ENCODE measurements at regions of chr7 and their contacts with region 1.

Region 1: GRCh38 chr7:128343554-128344430 is at the start of gene RBM28:
- DNase-seq: peak; percentile 95
- H3K4me3 Mint-ChIP-seq: peak within 1 kb of the TSS; percentile 94
- H3K27ac Mint-ChIP-seq: peak within 1 kb of the TSS; percentile 96
- H3K4me1 Mint-ChIP-seq: peaks cover 8% of the 10 kb centered on the region
- H3K27me3 Mint-ChIP-seq: peaks cover 7% of the 10 kb centered on the region
- CTCF ChIP-seq: no peak
- total RNA-seq, gene RBM28: 61.5 and 63.8 TPM in 2 replicates

Region 2: GRCh38 chr7:128322040-128322643 is 21.6 kb before region 1 on chr7:
- CTCF ChIA-PET with region 1: interaction called, 10 read pairs
- POLR2A ChIA-PET with region 1: no interaction called
- intact Hi-C with region 1: no loop called
- DNase-seq: peak; percentile 56
- H3K4me3 Mint-ChIP-seq: no peak overlapping the region
- H3K27ac Mint-ChIP-seq: no peak overlapping the region
- H3K4me1 Mint-ChIP-seq: no peaks in the 10 kb centered on the region
- H3K27me3 Mint-ChIP-seq: no peaks in the 10 kb centered on the region
- CTCF ChIP-seq: peak; percentile 49

Region 3: DNA sequence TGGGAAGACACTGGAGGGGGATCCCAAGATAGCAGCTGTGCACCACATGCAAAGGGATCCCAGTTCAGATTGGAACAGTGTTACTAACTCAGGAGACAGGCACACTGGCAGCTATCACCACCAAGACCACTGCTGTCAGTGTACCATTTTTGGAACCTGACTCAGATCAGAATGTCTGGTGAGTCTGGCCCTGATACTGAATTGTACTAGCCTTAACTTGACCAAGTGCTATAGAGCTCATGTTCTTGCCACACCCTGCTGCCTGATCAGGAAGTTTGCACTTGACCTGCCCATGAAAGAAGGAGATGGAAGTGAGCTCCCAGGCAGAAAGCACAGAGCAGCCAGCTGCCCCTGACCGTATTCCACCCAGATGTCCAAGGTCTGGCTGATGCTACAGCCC is 22.5 kb after region 1 on chr7:
- CTCF ChIA-PET with region 1: interaction called, 21 read pairs
- POLR2A ChIA-PET with region 1: interaction called, 6 read pairs
- intact Hi-C with region 1: no loop called
- DNase-seq: no peak
- H3K4me3 Mint-ChIP-seq: no peak overlapping the region
- H3K27ac Mint-ChIP-seq: no peak overlapping the region
- H3K4me1 Mint-ChIP-seq: peaks cover 6% of the 10 kb centered on the region
- H3K27me3 Mint-ChIP-seq: peaks cover 11% of the 10 kb centered on the region
- CTCF ChIP-seq: no peak

Region 4: DNA sequence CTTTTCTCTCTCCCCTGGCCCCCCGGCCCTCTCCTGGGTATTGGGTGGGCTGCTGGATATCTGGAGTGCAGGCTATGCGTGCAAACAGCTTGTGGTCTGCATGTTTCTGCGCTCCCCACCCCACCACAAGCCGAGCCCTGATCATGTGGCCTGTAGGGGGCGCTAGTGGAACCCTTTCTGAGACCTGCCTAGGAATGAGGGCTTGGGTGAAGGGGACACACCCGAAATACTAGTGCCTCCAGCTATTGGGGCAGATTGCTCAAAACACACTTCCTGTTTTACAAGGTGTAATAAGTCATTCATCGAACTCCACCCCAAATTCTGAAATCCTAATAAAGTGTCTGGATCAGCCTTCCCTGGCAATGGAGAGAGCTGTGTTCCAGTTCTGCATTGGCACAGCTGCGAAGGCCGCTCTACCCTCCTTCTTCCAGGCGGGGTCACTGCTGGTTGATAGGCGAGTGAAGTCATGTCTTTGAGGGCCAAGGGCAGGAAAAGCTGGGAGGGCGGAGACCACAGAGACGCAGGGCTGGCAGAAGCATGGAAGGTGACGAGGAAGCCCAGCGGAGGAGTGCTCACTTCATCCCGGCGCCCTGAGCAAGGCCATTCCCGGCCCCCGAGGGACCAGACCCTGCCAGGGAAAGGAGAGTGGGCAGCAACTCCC is 37.5 kb after region 1 on chr7:
- CTCF ChIA-PET with region 1: interaction called, 372 read pairs
- POLR2A ChIA-PET with region 1: interaction called, 18 read pairs
- intact Hi-C with region 1: no loop called
- DNase-seq: peak; percentile 81
- H3K4me3 Mint-ChIP-seq: no peak overlapping the region
- H3K27ac Mint-ChIP-seq: no peak overlapping the region
- H3K4me1 Mint-ChIP-seq: peaks cover 11% of the 10 kb centered on the region
- H3K27me3 Mint-ChIP-seq: no peaks in the 10 kb centered on the region
- CTCF ChIP-seq: peak; percentile 75

Region 5: DNA sequence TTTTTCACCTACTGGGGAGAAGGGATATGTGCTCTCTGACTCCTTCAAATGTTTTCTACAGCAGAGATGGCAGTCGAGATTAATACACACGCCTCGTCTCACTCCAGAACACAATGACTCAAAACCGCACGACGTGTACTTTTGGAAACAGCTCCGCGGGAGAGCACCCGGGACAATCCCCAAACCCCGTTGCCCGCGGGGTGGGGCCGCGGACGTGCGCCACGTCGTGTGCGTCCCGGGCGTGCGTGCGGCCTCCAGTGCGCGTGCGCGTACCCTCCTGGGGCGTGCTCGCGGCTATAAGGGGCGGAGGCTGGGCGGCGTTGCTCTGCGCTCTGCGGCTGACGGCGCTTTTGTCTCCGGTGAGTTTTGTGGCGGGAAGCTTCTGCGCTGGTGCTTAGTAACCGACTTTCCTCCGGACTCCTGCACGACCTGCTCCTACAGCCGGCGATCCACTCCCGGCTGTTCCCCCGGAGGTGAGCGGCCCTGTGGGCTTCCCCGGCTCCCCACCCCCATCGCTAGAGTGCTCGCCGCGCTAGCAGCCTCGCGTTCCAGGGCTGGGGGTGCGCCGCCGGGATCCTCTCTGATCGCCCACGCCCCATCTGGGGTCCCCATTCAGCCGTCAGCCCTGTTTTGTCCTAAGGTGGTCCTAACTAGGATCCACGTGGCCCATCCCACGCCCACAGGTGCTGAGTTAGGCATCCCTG is 111.9 kb after region 1 on chr7 and contains the start of gene HILPDA:
- CTCF ChIA-PET with region 1: interaction called, 15 read pairs
- POLR2A ChIA-PET with region 1: no interaction called
- intact Hi-C with region 1: loop called (anchors 2 kb)
- DNase-seq: peak; percentile 94
- H3K4me3 Mint-ChIP-seq: peak within 1 kb of the TSS; percentile 95
- H3K27ac Mint-ChIP-seq: peak within 1 kb of the TSS; percentile 88
- H3K4me1 Mint-ChIP-seq: peaks cover 14% of the 10 kb centered on the region
- H3K27me3 Mint-ChIP-seq: peaks cover 25% of the 10 kb centered on the region
- CTCF ChIP-seq: no peak
- total RNA-seq, gene HILPDA: 6.2 and 8.3 TPM in 2 replicates

Measured in MCF 10A (cell line).